MCF 10A (cell line): ENCODE measurements at regions of chr13 and their contacts with region 1.

Region 1: GRCh38 chr13:77300176-77301037 is 26.5 kb downstream of the MYCBP2 start:
- DNase-seq: peak; percentile 65
- H3K4me3 Mint-ChIP-seq: no peak overlapping the region
- H3K27ac Mint-ChIP-seq: no peak overlapping the region
- H3K4me1 Mint-ChIP-seq: peaks cover 25% of the 10 kb centered on the region
- H3K27me3 Mint-ChIP-seq: no peaks in the 10 kb centered on the region
- CTCF ChIP-seq: no peak

Region 2: GRCh38 chr13:77310579-77311279 is 10.3 kb after region 1 on chr13:
- CTCF ChIA-PET with region 1: interaction called, 5 read pairs
- POLR2A ChIA-PET with region 1: interaction called, 3 read pairs
- intact Hi-C with region 1: loop called (anchors 1 kb)
- DNase-seq: no peak
- H3K4me3 Mint-ChIP-seq: no peak overlapping the region
- H3K27ac Mint-ChIP-seq: peak overlapping the region; percentile 25
- H3K4me1 Mint-ChIP-seq: peaks cover 54% of the 10 kb centered on the region
- H3K27me3 Mint-ChIP-seq: no peaks in the 10 kb centered on the region
- CTCF ChIP-seq: no peak

Region 3: DNA sequence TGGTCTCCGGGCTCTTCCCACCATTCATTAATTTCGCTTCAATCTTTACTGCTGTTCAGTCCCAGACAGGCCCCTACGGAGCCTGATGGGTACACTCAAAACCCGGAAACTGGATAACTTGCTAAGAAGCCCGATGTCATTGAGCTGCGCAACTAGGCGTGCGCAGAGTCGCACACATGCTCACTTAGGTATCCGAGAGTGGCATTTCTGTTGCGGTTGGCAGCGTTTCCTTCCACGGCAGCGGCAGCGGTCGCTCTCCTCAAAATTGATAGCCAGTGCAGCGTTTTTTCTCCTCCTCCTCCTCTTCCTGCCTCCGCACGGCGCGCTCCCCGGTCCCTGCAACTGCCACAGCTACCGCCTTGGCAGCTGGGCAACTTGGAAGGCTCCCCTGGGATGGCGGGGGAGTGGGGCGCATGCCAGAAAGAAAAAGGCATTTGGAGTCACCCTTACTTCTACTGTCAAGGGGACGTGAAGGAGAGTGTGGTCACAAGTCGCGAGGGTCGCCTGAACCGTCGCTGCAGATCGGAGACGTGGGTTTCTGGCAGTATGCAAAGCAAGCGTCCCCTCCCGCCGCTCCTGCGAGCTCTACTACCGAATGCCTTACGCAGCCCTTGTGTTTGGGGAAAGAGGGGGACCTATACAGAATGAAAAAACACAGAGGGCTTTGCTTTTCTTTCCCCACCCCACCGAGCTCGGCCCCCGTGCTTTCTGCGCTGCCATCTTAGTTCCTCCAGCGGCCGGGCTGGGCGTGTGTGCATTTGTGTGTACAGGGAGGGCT is 28.9 kb after region 1 on chr13:
- CTCF ChIA-PET with region 1: interaction called, 5 read pairs
- POLR2A ChIA-PET with region 1: interaction called, 21 read pairs
- intact Hi-C with region 1: no loop called
- DNase-seq: peak; percentile 93
- H3K4me3 Mint-ChIP-seq: peak overlapping the region; percentile 97
- H3K27ac Mint-ChIP-seq: peak overlapping the region; percentile 47
- H3K4me1 Mint-ChIP-seq: peaks cover 11% of the 10 kb centered on the region
- H3K27me3 Mint-ChIP-seq: peaks cover 7% of the 10 kb centered on the region
- CTCF ChIP-seq: no peak